ENCODE measurements at regions of chr6 and their contacts with region 1.

Region 1: GRCh38 chr6:593139-593906 is 63.6 kb downstream of the HUS1B start:
- DNase-seq: peak; percentile 65
- CTCF ChIP-seq: peak; percentile 48

Region 2: DNA sequence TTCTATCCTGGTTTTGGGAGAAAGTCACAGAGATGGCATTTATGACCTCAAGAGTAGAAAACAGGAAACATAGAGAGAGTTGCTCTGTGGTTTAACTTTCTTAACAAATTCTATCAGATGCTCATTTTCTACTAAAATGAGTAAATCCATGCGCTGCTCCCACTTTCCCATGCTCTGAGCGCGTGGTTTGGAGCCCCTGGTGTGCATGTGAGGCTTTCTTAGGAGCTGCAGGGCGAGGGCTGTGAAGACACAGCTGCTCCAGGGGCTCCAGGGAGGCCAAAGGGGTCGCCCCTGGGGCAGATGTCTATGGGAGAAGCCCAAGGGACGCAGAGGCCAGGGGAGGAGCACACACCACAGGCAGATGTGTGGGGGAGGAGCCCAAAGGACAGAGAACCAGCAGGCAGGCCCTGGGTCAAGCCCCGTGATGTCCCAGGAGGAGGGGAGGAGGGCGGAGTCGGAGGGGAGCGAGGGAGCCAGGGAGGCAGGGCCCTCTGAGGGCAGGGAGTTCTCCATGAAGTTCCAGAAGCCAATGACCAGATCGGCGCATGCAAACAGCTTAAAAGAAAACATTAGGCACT is 78.8 kb before region 1 on chr6:
- in situ Hi-C with region 1: no loop called
- DNase-seq: no peak
- CTCF ChIP-seq: no peak

Region 3: GRCh38 chr6:797479-798077 is 204.3 kb after region 1 on chr6:
- in situ Hi-C with region 1: loop called (anchors 25 kb)
- DNase-seq: peak; percentile 53
- CTCF ChIP-seq: peak; percentile 73

Region 4: GRCh38 chr6:1396952-1397868 is 803.9 kb after region 1 on chr6:
- in situ Hi-C with region 1: loop called (anchors 25 kb)
- DNase-seq: peak; percentile 91
- CTCF ChIP-seq: peak; percentile 90